Mammary epithelial cell (primary cell): ENCODE measurements at regions of chr1 and their contacts with region 1.

Region 1: GRCh38 chr1:69693936-69694675 is 126.4 kb downstream of the LRRC7 start:
- DNase-seq: peak; percentile 58
- H3K4me3 ChIP-seq: no peak overlapping the region
- H3K27ac ChIP-seq: peak overlapping the region; percentile 12
- H3K4me1 ChIP-seq: peaks cover 13% of the 10 kb centered on the region
- H3K27me3 ChIP-seq: no peaks in the 10 kb centered on the region
- CTCF ChIP-seq: no peak

Region 2: GRCh38 chr1:69551476-69552324 is 142.4 kb before region 1 on chr1:
- CTCF ChIA-PET with region 1: no interaction called
- dilution Hi-C with region 1: no loop called
- in situ Hi-C with region 1: no loop called
- intact Hi-C with region 1: no loop called
- DNase-seq: no peak
- H3K4me3 ChIP-seq: no peak overlapping the region
- H3K27ac ChIP-seq: no peak overlapping the region
- H3K4me1 ChIP-seq: no peaks in the 10 kb centered on the region
- H3K27me3 ChIP-seq: no peaks in the 10 kb centered on the region
- CTCF ChIP-seq: no peak

Region 3: GRCh38 chr1:69569576-69570328 is 124.4 kb before region 1 on chr1:
- CTCF ChIA-PET with region 1: no interaction called
- dilution Hi-C with region 1: no loop called
- in situ Hi-C with region 1: no loop called
- intact Hi-C with region 1: loop called (anchors 10 kb)
- DNase-seq: no peak
- H3K4me3 ChIP-seq: peak overlapping the region in 1 of 3 experiments; percentile 4
- H3K27ac ChIP-seq: no peak overlapping the region
- H3K4me1 ChIP-seq: peaks cover 21% of the 10 kb centered on the region
- H3K27me3 ChIP-seq: peaks cover 11% of the 10 kb centered on the region
- CTCF ChIP-seq: no peak